ENCODE measurements at regions of chr2 and their contacts with region 1.

Region 1: DNA sequence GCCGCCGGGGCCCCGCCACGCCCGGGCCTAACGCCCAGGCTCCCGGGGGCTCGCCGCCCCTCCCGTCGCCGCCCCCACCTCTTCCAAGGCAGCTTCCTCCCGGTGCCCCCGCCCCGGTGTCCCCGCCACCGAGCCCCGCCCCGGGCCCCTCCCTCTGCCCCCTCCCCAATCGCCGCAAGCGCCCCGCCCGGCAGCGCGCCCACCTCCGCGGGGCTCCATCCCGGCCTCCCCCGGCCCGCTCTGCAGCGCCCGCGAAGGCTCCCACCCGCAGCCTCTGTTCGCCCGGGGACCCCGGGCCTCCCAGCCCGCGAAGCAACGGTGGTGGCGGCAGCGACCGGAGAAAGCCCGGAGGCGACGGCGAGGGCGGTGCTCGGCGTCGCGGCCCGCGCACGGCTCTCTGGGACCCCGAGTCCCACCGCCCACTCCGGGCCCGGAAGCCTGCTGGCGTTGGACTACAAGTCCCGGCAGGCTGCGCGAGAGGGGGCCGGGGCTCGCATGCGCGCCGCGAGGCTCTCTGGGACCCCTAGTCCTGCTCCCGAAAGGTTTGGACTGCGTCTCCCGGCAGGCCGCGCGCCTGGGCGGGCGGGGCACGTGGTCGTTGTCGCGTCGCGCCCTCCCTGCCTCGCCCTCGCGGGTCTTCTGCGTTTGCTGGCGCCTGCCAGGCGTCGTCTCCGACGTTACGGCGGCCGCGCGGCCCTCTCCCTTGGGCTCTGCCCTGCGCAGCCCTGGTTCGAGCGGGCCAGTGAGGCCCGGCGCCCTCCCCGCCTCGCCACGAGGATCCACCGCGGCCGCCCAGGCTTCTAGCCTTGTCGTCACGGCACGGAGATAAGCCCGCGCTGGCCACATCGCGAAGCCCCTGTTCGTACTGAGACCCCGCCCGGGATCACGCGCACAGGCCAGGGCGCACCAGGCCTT is at the start of gene STK25:
- DNase-seq: peak; percentile 99
- H3K4me3 ChIP-seq: peak within 1 kb of the TSS; percentile 60 to 87 (median 87)
- H3K27ac ChIP-seq: peak within 1 kb of the TSS; percentile 69 to 95 (median 79)
- H3K4me1 ChIP-seq: peaks cover 23 to 35% of the 10 kb centered on the region in 2 donors
- H3K27me3 ChIP-seq: no peaks in the 10 kb centered on the region
- CTCF ChIP-seq: peak in 1 of 6 experiments; percentile 21
- POLR2A ChIP-seq: peak in 1 of 2 donors; percentile 80
- total RNA-seq, gene STK25: 236 to 364 (median 266) TPM

Region 2: GRCh38 chr2:241692448-241692847 is 184.0 kb after region 1 on chr2:
- intact Hi-C with region 1: loop called (anchors 10 kb)
- DNase-seq: no peak
- H3K4me3 ChIP-seq: no peak overlapping the region
- H3K27ac ChIP-seq: no peak overlapping the region
- H3K4me1 ChIP-seq: peaks cover 12 to 15% of the 10 kb centered on the region in 2 donors
- H3K27me3 ChIP-seq: no peaks in the 10 kb centered on the region
- CTCF ChIP-seq: no peak
- POLR2A ChIP-seq: no peak